AG04449 (cell line): ENCODE measurements at regions of chr6 and their contacts with region 1.

Region 1: GRCh38 chr6:75266716-75267291 is 17.8 kb downstream of the TMEM30A start:
- DNase-seq: no peak
- H3K4me3 ChIP-seq: no peak overlapping the region
- CTCF ChIP-seq: peak; percentile 54

Region 2: GRCh38 chr6:74505391-74505790 is 761.4 kb before region 1 on chr6:
- CTCF ChIA-PET with region 1: no interaction called
- POLR2A ChIA-PET with region 1: no interaction called
- DNase-seq: no peak
- H3K4me3 ChIP-seq: no peak overlapping the region
- CTCF ChIP-seq: no peak

Region 3: DNA sequence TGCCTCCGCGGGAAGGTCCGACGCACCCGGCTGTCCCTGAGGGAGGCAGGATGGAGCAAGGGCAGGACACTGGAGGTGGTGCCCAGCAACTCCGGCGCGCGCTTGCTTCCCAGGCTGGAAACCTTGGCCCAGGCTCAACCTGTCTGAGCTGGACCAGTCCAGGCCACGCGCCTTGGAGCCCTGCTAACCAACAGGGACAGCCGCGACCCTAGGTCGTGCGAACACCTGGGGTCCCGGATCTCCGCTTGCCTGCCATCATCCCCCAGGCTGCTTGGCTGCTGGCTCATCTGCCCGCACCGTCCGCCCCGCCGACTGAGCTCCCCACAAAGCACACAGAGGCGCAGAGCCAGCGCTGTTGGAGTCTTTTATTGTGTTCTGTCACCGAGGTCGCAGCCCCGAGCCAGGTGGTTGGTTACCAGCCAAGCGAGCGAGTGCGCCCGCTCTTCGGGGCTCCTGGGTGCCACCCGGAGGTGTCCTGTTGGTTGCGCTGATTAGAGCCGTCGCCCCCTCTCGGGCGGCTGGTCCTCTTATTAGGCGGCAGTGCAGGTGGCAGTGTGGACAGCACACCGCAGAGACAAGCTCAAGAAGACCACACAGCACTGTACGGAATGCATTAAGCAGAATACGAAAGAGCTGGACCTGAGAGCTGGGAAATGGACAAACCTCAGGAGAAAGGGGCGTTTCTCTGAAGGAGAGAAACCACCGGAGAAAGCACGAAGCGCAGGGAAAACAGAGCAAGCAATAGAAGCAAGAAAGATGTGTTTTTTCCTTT is 64.7 kb before region 1 on chr6:
- CTCF ChIA-PET with region 1: no interaction called
- POLR2A ChIA-PET with region 1: no interaction called
- DNase-seq: no peak
- H3K4me3 ChIP-seq: peak overlapping the region; percentile 100
- CTCF ChIP-seq: no peak

Region 4: GRCh38 chr6:75249837-75250236 is 17.0 kb before region 1 on chr6:
- CTCF ChIA-PET with region 1: interaction called, 34 read pairs
- POLR2A ChIA-PET with region 1: no interaction called
- DNase-seq: no peak
- H3K4me3 ChIP-seq: no peak overlapping the region
- CTCF ChIP-seq: no peak

Region 5: DNA sequence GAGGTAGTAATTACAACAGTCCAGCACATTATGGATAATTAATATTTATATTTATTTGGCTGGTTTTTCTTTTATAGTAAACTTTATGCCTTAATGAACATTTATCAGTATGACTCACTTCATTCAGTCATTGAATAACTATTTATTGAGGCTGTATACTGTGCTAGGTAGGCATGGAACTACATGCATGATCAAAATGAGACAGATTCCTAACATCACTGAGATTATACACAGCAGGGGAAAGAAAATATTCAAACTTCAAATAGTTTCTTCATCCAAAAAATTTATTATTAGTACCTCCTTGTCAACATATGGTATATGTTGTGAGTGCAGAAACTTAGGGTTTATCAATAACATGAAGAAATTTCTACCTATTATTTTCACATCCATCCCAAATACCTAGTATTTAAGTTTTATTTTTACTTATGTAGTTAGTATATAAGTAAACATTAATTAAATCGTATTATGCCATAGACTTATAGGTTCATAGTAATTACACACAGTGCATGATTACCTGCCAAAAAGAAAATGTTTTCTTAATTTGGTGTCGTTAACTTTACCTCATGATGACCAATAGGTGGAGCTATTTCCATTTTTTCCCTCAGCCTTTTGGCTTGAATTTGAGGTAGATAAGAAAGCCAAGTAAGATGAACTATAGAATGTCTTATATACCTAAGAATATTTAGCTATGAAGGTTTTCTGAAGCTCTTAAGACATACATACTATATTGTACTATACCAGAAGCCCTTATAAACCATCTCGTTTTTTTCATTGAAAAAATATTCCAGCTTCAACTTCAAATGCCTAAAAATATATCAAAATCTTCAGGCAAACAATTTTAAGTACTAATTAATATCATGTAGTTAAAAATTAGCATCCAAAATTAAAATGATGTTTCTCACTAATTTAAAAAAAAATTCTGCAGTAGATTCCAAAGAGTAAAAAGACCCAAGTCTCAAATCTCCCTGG is 30.3 kb after region 1 on chr6:
- CTCF ChIA-PET with region 1: interaction called, 44 read pairs
- POLR2A ChIA-PET with region 1: no interaction called
- DNase-seq: peak; percentile 24
- H3K4me3 ChIP-seq: no peak overlapping the region
- CTCF ChIP-seq: peak; percentile 35

Region 6: GRCh38 chr6:75526502-75527127 is 259.8 kb after region 1 on chr6:
- CTCF ChIA-PET with region 1: interaction called, 86 read pairs
- POLR2A ChIA-PET with region 1: interaction called, 3 read pairs
- DNase-seq: no peak
- H3K4me3 ChIP-seq: no peak overlapping the region
- CTCF ChIP-seq: peak; percentile 44